Right ventricle myocardium inferior (tissue), 1 donor: ENCODE measurements at regions of chr14 and their contacts with region 1.

Region 1: DNA sequence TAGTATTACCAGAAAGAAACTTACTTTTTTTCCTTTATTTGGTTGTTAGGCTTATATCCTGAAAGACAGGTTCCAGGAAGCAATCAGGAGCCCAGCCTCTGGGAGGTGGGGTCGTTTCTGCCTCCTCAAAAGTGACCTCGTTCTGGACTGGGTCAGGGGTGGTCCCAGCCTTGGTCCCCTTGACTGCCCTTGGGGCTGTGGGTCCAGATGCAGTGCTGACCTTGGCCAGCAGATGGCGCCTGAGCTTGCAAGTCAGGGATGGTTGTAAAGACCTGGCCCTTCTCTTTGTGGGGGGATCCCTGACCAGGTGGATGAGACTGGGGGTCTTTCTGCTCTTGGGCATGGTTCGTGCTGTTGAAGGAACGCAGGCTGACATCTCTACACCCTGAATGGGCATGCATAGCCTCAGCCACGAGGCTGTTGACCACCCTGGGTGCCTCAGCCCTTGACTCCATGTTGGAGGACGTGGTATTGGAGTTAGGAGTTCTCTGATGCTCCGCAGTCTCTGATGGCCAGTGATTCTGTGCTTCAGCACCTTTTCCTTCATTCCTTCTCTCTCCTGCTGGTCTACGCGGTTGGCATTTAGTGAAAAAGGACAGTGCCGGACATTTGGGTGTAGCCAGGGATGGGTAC is 62.4 kb downstream of the ADCK1 start:
- DNase-seq: peak; percentile 85
- ATAC-seq: peak; percentile 74

Region 2: DNA sequence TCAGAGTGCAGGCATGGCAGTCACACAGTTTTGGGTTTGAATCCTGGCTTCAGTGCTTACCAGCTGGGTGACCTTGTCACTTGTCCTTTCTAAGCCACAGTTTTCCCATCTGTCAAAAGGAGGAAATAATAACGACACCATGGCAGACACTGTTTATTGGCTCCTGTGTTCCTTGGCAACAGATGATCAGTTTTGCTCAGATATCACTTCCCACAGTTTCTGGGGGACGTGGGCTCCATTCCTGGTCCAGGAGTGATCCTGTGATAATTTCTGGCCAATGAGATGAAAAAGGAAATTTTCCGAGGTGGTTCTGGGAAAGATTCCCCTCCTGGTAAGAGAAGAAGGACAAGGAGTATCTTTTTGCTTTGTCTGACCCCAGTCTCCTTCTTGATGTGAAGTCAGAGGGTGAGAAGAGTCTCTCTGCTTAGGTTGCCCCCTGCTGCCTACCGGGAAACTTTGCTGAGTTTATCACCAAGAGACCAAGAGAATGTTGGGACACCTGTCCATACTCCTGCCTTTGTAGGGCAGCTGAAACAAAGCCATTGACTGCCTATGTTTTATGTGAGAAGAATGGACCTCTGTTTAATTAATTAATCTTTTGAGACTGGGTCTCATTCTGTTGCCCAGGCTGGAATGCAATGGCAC is 129.0 kb after region 1 on chr14:
- intact Hi-C with region 1: loop called (anchors 5 kb)
- DNase-seq: no peak
- ATAC-seq: no peak